ENCODE measurements at regions of chr17 and their contacts with region 1.

Region 1: DNA sequence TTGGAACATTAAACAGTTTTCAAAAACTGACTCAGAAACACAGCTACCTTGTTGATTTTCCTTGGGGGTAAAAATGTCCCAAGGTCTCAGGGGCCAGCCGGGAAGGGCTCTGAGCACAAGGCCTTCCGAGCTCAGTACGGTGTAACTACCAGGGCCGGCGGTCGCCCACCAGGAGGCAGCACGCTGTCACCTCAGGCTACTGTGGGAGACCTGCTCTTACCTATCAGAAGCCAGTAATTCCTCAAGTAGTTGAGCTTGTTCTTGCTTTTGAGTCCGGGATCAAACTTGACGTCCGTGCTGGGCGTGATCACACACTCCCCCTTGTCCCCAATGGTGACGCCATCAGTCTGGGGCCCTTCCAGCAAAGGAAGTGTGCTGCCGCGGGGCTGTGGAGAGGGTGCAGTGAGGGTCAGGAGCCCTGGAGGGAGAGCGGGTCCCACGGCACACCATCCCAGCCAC is 43.4 kb upstream of the ICAM2 start:
- DNase-seq: peak; percentile 84
- ATAC-seq: peak; percentile 99
- H3K4me3 Mint-ChIP-seq: peak overlapping the region; percentile 49
- H3K27ac Mint-ChIP-seq: peak overlapping the region; percentile 43; the same call in 1 of the 2 replicates
- H3K4me1 Mint-ChIP-seq: peaks cover 12% of the 10 kb centered on the region
- H3K27me3 Mint-ChIP-seq: peaks cover 4% of the 10 kb centered on the region; the same call in 1 of the 2 replicates
- CTCF ChIP-seq: peak; percentile 54; the same call in 1 of the 2 replicates

Region 2: GRCh38 chr17:63919311-63919723 is 144.5 kb before region 1 on chr17:
- CTCF ChIA-PET with region 1: interaction called, 17 read pairs
- POLR2A ChIA-PET with region 1: no interaction called
- DNase-seq: peak; percentile 81
- ATAC-seq: peak; percentile 95
- H3K4me3 Mint-ChIP-seq: peak overlapping the region; percentile 46; the same call in 1 of the 2 replicates
- H3K27ac Mint-ChIP-seq: no peak overlapping the region
- H3K4me1 Mint-ChIP-seq: peaks cover 16% of the 10 kb centered on the region
- H3K27me3 Mint-ChIP-seq: peaks cover 3% of the 10 kb centered on the region; the same call in 1 of the 2 replicates
- CTCF ChIP-seq: peak; percentile 97

Region 3: DNA sequence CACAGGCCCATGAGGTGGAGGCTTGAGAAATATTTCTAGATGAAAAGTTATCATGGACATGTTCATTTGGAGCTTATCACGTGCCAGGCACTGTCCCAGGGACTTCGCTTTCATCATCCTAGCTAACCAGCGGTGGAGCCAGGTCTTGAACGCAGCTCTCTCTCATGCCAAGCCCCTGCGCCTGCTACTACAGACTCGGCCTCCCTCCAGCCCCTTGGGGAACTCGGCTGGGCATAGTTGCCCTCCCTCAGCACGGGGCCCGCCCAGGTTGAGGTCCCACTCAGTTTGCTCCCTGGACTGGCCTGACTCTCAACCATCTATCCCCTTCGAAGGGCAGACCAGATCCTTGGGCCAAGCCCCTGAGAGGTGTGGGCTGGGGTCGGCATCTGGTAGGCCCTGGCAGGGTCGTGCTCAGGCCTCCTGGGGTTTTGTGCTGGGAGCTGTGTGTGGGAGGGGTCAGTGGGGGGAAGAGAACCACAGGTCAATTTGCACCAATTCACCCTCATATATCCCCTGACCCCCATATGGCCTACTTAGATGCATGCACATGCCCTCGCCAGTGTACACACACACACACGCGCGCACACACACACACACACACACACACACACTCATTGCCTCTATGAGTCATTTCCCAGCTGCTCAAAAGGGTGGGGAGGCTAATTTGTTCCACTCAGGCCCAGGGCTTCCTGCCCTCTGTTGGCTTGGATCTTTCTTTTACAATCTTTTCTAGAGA is 79.0 kb before region 1 on chr17:
- CTCF ChIA-PET with region 1: no interaction called
- POLR2A ChIA-PET with region 1: no interaction called
- DNase-seq: no peak
- ATAC-seq: no peak
- H3K4me3 Mint-ChIP-seq: no peak overlapping the region
- H3K27ac Mint-ChIP-seq: no peak overlapping the region
- H3K4me1 Mint-ChIP-seq: peaks cover 15% of the 10 kb centered on the region
- H3K27me3 Mint-ChIP-seq: peaks cover 4% of the 10 kb centered on the region; the same call in 1 of the 2 replicates
- CTCF ChIP-seq: no peak

Region 4: GRCh38 chr17:64036198-64036922 is 27.4 kb before region 1 on chr17:
- CTCF ChIA-PET with region 1: interaction called, 15 read pairs
- POLR2A ChIA-PET with region 1: no interaction called
- DNase-seq: peak; percentile 60
- ATAC-seq: peak; percentile 99
- H3K4me3 Mint-ChIP-seq: no peak overlapping the region
- H3K27ac Mint-ChIP-seq: no peak overlapping the region
- H3K4me1 Mint-ChIP-seq: 0 out of 2 replicates have a peak, but pooled peaks cover 3% of the 10 kb centered on the region
- H3K27me3 Mint-ChIP-seq: no peaks in the 10 kb centered on the region
- CTCF ChIP-seq: no peak

Region 5: GRCh38 chr17:64081802-64082799 is 18.3 kb after region 1 on chr17:
- CTCF ChIA-PET with region 1: interaction called, 28 read pairs
- POLR2A ChIA-PET with region 1: no interaction called
- DNase-seq: no peak
- ATAC-seq: no peak
- H3K4me3 Mint-ChIP-seq: no peak overlapping the region
- H3K27ac Mint-ChIP-seq: peak overlapping the region; percentile 43; the same call in 1 of the 2 replicates
- H3K4me1 Mint-ChIP-seq: peaks cover 10% of the 10 kb centered on the region
- H3K27me3 Mint-ChIP-seq: no peaks in the 10 kb centered on the region
- CTCF ChIP-seq: no peak

Region 6: DNA sequence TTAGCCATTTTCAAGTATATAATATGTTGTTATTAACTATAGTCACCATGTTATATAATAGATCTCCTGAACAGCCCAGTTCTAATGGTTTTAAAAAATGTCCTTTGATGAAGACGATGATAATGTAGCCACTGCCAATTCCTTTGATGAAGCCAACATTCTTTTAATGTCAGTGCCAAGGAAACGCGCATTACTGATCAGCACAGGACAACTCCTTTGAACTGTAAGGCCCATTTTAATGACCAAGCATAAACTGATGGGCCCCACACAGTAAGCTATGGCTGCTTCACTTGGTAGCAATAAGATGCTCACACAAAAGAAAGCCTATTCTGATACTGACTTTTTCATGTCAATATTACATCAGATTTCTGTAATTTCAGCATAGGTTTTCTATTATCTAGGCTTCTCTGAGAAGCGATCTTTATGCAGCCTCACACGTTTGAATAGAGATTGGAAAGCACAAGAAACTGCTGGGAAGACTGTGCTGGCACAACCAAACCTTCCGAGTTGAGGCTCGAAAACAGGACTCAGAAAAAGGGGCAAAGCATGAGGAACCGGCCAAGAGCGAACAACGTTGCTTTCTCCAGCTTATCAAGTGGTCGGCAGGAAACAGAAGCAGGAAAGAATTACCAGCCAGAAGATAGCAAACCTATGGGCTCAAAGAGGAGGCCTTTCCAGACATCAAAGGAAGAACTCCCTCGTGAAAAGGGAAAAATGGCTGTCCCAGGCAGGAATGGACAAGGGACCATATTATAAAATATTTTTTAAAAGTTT is 46.8 kb after region 1 on chr17:
- CTCF ChIA-PET with region 1: interaction called, 21 read pairs
- POLR2A ChIA-PET with region 1: no interaction called
- DNase-seq: no peak
- ATAC-seq: no peak
- H3K4me3 Mint-ChIP-seq: no peak overlapping the region
- H3K27ac Mint-ChIP-seq: peak overlapping the region; percentile 78
- H3K4me1 Mint-ChIP-seq: peaks cover 16% of the 10 kb centered on the region
- H3K27me3 Mint-ChIP-seq: no peaks in the 10 kb centered on the region
- CTCF ChIP-seq: no peak

Region 7: DNA sequence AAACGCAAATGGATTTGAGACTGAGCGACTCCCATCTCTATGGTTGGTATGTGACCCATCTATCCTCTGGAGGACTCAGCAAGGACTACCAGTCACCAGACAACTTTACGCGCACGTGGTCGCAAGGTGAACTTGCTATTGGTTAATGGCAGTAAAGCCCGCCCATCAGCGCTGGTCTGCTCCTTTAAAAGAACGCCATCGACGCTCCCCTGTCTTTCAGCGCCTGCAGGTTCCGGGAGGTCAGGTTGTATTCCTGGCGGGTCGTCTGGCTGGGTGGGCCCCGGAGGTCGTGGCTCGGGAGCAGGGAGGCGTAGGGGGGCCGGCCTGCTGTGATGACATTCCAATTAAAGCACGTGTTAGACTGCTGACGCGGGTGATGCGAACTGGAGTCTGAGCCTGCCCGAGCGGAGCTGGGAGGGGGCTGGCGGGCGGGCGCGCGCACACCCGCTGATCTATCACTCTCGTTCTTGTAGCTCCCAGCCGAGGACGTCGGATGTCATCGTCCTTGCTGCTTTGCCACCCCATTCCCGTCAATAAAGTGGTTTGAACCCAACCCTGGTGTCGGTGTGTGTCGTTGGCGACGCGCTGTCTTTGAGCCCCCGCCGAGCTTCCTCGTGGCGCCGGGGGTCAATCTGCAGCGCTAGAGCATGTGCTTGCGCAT is 82.1 kb after region 1 on chr17:
- CTCF ChIA-PET with region 1: interaction called, 11 read pairs
- POLR2A ChIA-PET with region 1: interaction called, 6 read pairs
- DNase-seq: peak; percentile 93
- ATAC-seq: peak; percentile 85
- H3K4me3 Mint-ChIP-seq: no peak overlapping the region
- H3K27ac Mint-ChIP-seq: no peak overlapping the region
- H3K4me1 Mint-ChIP-seq: peaks cover 23% of the 10 kb centered on the region
- H3K27me3 Mint-ChIP-seq: no peaks in the 10 kb centered on the region
- CTCF ChIP-seq: no peak

Region 8: GRCh38 chr17:64262417-64263260 is 198.8 kb after region 1 on chr17 and contains the start of gene TEX2:
- CTCF ChIA-PET with region 1: no interaction called
- POLR2A ChIA-PET with region 1: no interaction called
- DNase-seq: peak; percentile 28
- ATAC-seq: 0 out of 2 replicates have a peak, but pooled peaks have one; percentile 2
- H3K4me3 Mint-ChIP-seq: peak within 1 kb of the TSS; percentile 96
- H3K27ac Mint-ChIP-seq: peak within 1 kb of the TSS; percentile 91
- H3K4me1 Mint-ChIP-seq: peaks cover 13% of the 10 kb centered on the region
- H3K27me3 Mint-ChIP-seq: peaks cover 37% of the 10 kb centered on the region
- CTCF ChIP-seq: no peak
- total RNA-seq, gene TEX2: 10.8 to 13.3 TPM (median 12.2 TPM) in 3 replicates

Measured in WTC11 (cell line).